Activated CD8-positive, alpha-beta T cell treated with anti-CD3 and anti-CD28 coated beads for 36 hours (primary cell): ENCODE measurements at regions of chr12 and their contacts with region 1.

Region 1: DNA sequence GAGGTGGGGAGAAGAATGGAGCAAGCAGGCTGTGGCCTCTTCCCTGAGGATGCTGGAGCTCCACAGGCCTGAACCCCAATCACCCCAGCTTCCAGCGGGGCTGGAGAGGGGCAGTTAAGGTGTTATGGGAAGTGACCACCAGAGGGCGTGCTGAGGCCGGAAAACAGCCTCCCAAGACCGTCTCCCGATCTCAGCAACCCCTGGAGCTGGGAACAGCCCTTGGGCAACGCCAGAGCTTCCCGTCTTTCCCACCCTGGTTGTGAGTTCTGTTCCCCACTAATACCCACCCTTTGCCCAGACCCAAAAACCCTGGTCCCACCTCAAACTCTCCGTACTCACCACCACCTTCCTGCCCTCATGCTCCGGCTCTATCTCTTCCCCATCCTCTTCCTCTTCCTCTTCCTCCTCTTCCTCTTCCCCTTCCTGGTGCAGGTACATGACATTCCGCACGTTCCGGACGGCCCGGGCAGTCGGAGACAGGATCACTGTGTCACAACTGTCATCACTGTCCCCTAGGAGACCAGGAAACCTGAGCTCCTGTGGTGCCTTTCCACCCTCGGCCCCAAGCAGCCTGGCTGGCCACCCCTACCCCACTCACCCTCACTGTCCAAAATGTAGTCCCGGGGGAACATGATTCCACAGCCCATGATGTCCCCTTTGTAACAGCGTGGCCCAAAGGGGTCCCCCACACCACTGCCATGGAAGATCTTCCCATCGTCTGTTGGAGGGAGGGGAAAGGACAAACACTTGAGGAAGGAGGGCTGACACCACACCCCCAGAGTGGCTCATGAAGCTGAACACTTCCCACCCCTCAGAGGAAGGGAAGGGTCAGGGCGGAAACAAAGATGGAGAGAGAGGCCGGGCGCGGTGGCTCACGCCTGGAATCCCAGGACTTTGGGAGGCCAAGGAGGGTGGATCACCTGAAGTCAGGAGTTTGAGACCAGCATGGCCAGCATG is 12.9 kb downstream of the SPRYD3 start:
- DNase-seq: peak; percentile 80
- ATAC-seq: peak; percentile 66
- H3K4me3 Mint-ChIP-seq: no peak overlapping the region
- H3K27ac Mint-ChIP-seq: peak overlapping the region; percentile 40
- H3K4me1 Mint-ChIP-seq: peaks cover 12% of the 10 kb centered on the region
- H3K27me3 Mint-ChIP-seq: no peaks in the 10 kb centered on the region
- CTCF ChIP-seq: peak; percentile 96

Region 2: GRCh38 chr12:52903285-52903854 is 162.9 kb before region 1 on chr12:
- CTCF ChIA-PET with region 1: no interaction called
- POLR2A ChIA-PET with region 1: no interaction called
- intact Hi-C with region 1: no loop called
- DNase-seq: peak; percentile 76
- ATAC-seq: peak; percentile 90
- H3K4me3 Mint-ChIP-seq: peak overlapping the region; percentile 41
- H3K27ac Mint-ChIP-seq: no peak overlapping the region
- H3K4me1 Mint-ChIP-seq: peaks cover 4% of the 10 kb centered on the region
- H3K27me3 Mint-ChIP-seq: no peaks in the 10 kb centered on the region
- CTCF ChIP-seq: no peak

Region 3: GRCh38 chr12:53047221-53048042 is 18.8 kb before region 1 on chr12:
- CTCF ChIA-PET with region 1: interaction called, 93 read pairs
- POLR2A ChIA-PET with region 1: interaction called, 4 read pairs
- intact Hi-C with region 1: no loop called
- DNase-seq: peak; percentile 64
- ATAC-seq: peak; percentile 80
- H3K4me3 Mint-ChIP-seq: peak overlapping the region; percentile 85
- H3K27ac Mint-ChIP-seq: peak overlapping the region; percentile 27
- H3K4me1 Mint-ChIP-seq: peaks cover 27% of the 10 kb centered on the region
- H3K27me3 Mint-ChIP-seq: no peaks in the 10 kb centered on the region
- CTCF ChIP-seq: peak; percentile 54

Region 4: GRCh38 chr12:53079226-53080117 is 13.2 kb after region 1 on chr12 and contains the start of gene SPRYD3:
- CTCF ChIA-PET with region 1: interaction called, 553 read pairs
- POLR2A ChIA-PET with region 1: interaction called, 37 read pairs
- intact Hi-C with region 1: no loop called
- DNase-seq: peak; percentile 98
- ATAC-seq: peak; percentile 98
- H3K4me3 Mint-ChIP-seq: peak within 1 kb of the TSS; percentile 83
- H3K27ac Mint-ChIP-seq: peak within 1 kb of the TSS; percentile 80
- H3K4me1 Mint-ChIP-seq: peaks cover 34% of the 10 kb centered on the region
- H3K27me3 Mint-ChIP-seq: no peaks in the 10 kb centered on the region
- CTCF ChIP-seq: no peak
- total RNA-seq, gene SPRYD3: 24.8 to 25.0 TPM

Region 5: DNA sequence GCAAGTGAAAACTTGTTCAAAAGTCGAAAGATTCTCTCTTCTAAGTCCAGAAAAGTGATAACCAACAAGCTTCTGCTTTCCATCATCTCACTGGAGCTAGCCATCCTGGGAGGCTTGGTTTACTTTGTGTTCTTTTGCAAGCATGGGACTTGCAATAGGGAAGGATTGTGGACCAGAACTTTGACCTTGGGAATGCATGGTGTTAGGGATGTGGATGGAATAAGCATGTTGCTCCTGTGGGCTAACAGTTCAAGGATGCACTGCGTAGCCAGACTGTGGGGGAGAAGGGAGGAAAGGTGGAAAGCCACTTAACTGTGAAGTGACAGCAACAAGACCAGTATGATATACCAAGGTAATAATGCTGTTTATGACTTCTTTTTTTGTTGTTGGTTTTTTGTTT is 65.6 kb after region 1 on chr12:
- CTCF ChIA-PET with region 1: interaction called, 11 read pairs
- POLR2A ChIA-PET with region 1: no interaction called
- intact Hi-C with region 1: no loop called
- DNase-seq: no peak
- ATAC-seq: no peak
- H3K4me3 Mint-ChIP-seq: no peak overlapping the region
- H3K27ac Mint-ChIP-seq: no peak overlapping the region
- H3K4me1 Mint-ChIP-seq: no peaks in the 10 kb centered on the region
- H3K27me3 Mint-ChIP-seq: no peaks in the 10 kb centered on the region
- CTCF ChIP-seq: no peak

Region 6: GRCh38 chr12:53190108-53190729 is 124.0 kb after region 1 on chr12:
- CTCF ChIA-PET with region 1: interaction called, 14 read pairs
- POLR2A ChIA-PET with region 1: no interaction called
- intact Hi-C with region 1: no loop called
- DNase-seq: peak; percentile 67
- ATAC-seq: peak; percentile 94
- H3K4me3 Mint-ChIP-seq: no peak overlapping the region
- H3K27ac Mint-ChIP-seq: peak overlapping the region; percentile 77
- H3K4me1 Mint-ChIP-seq: peaks cover 17% of the 10 kb centered on the region
- H3K27me3 Mint-ChIP-seq: no peaks in the 10 kb centered on the region
- CTCF ChIP-seq: peak; percentile 77

Region 7: GRCh38 chr12:53344824-53345485 is 278.7 kb after region 1 on chr12:
- CTCF ChIA-PET with region 1: interaction called, 16 read pairs
- POLR2A ChIA-PET with region 1: interaction called, 3 read pairs
- intact Hi-C with region 1: no loop called
- DNase-seq: peak; percentile 85
- ATAC-seq: peak; percentile 86
- H3K4me3 Mint-ChIP-seq: peak overlapping the region; percentile 82
- H3K27ac Mint-ChIP-seq: peak overlapping the region; percentile 71
- H3K4me1 Mint-ChIP-seq: peaks cover 19% of the 10 kb centered on the region
- H3K27me3 Mint-ChIP-seq: peaks cover 3% of the 10 kb centered on the region
- CTCF ChIP-seq: peak; percentile 75

Region 8: GRCh38 chr12:53543539-53543938 is 477.3 kb after region 1 on chr12:
- CTCF ChIA-PET with region 1: no interaction called
- POLR2A ChIA-PET with region 1: no interaction called
- intact Hi-C with region 1: no loop called
- DNase-seq: peak; percentile 79
- ATAC-seq: peak; percentile 99
- H3K4me3 Mint-ChIP-seq: no peak overlapping the region
- H3K27ac Mint-ChIP-seq: peak overlapping the region; percentile 79
- H3K4me1 Mint-ChIP-seq: peaks cover 16% of the 10 kb centered on the region
- H3K27me3 Mint-ChIP-seq: no peaks in the 10 kb centered on the region
- CTCF ChIP-seq: peak; percentile 87

Region 9: GRCh38 chr12:53618275-53618674 is 552.0 kb after region 1 on chr12:
- CTCF ChIA-PET with region 1: no interaction called
- POLR2A ChIA-PET with region 1: no interaction called
- intact Hi-C with region 1: no loop called
- DNase-seq: no peak
- ATAC-seq: no peak
- H3K4me3 Mint-ChIP-seq: peak overlapping the region; percentile 68
- H3K27ac Mint-ChIP-seq: peak overlapping the region; percentile 64
- H3K4me1 Mint-ChIP-seq: peaks cover 32% of the 10 kb centered on the region
- H3K27me3 Mint-ChIP-seq: no peaks in the 10 kb centered on the region
- CTCF ChIP-seq: no peak